Spleen (tissue), 13 donors: ENCODE measurements at regions of chr1 and their contacts with region 1.

Region 1: DNA sequence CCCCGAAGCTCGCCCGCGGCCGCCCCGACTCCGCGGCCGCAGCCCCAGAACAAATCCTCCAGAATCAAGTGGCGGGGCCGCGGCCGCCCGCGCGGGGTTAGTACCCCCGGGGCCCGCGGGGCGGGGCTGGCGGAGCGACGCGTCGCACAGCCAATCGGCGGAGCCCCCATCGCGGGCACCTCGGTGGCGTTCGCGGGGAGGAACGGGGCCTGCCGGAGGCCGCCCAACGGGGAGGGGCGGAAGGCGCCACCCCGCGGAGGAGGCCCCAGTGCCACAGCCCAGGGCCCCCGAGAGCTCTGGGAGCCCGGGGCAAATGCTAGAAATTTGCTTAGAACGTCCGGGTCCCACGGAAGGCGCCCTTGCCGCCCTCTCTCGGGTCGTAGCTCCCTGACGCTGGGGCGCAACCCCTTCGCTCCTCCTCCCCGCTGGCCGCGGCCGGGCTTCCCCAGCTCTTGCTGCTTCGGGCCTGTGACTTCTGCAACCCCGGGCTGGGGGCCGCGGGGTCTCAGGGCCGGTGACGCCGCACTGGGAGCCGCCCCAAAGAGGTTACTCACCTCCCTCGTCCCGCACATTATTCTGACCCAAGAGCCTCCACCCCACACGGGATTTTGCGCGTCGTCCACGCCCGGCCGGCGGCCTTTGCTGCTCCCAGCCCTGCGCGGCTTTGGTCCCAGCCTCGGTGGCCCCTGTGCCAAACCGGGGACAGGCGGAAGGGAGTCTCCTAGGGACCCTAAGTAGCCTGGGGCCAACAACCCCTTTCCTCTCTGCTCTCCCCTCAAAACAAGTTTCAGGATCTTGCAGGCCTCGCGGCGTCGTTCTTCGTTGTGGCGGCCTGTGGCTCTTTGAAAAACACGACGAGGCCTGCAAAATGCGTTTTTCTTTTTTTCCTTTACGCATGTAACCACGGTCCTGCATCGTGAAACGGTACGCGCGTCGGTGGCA is at the start of gene RUNX3:
- DNase-seq: peak; percentile 98
- H3K4me3 ChIP-seq: peak within 1 kb of the TSS; percentile 60 to 95 (median 72)
- H3K27ac ChIP-seq: peak within 1 kb of the TSS; percentile 82 to 99 (median 94)
- H3K4me1 ChIP-seq: peaks cover 32 to 95% (median 81%) of the 10 kb centered on the region in 6 donors
- H3K27me3 ChIP-seq: peaks cover 2 to 96% (median 72%) of the 10 kb centered on the region in 7 donors
- CTCF ChIP-seq: peak in 8 of 11 experiments; percentile 29 to 68 (median 50)
- POLR2A ChIP-seq: peak in 1 of 3 donors; percentile 22
- total RNA-seq, gene RUNX3: 38.1 to 76.3 (median 52.3) TPM

Region 2: GRCh38 chr1:24779689-24780464 is 150.6 kb before region 1 on chr1:
- intact Hi-C with region 1: no loop called
- DNase-seq: no peak
- H3K4me3 ChIP-seq: no peak overlapping the region
- H3K27ac ChIP-seq: no peak overlapping the region
- H3K4me1 ChIP-seq: peaks cover 0 to 32% (median 6%) of the 10 kb centered on the region in 6 donors
- H3K27me3 ChIP-seq: no peaks in the 10 kb centered on the region
- CTCF ChIP-seq: no peak
- POLR2A ChIP-seq: no peak

Region 3: DNA sequence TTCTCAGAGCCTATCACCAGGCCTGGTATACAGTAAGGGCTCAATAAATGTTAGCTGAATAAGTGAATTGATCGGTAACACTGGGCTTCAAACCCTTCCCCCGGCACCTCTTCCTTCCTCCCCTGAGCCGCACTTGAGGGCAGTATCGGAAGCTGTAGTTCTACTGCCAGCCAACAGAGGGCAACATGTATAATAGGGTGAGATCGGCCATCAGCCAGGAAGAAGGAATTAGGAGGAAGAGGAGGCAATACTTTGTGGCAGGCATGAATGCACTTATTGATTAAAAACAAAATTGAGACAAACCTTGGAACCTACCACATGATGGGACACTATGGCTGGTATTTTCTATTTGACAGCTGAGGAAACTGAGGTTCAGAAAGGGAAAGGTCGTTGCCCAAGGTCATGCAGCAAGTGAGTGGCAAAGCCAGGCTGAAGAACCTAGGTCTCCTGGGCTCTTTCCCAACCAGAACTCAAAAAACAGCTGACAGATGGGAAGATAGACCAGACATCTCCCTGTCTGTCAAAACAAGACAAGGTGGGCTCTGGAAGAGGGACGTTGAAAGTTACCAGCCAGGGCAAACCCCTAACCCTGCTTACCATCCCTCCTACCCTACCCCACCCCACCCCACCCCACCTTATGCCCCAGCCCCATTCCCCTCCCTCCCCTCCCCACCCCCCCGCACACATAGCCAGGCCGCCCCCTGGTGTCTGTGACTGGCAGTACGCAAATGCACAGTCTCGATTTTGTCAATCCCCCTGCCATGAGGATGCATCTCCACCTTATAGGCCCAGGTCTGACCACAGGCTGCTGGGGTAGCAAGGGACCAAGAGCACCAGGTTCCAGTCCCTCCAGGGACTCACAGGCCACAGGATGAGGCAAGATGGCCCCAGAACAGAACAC is 106.9 kb after region 1 on chr1:
- intact Hi-C with region 1: loop called (anchors 5 kb)
- DNase-seq: peak; percentile 87
- H3K4me3 ChIP-seq: peak overlapping the region in 1 of 8 donors; percentile 15
- H3K27ac ChIP-seq: peak overlapping the region in 1 of 8 donors; percentile 40
- H3K4me1 ChIP-seq: peaks cover 21 to 58% (median 39%) of the 10 kb centered on the region in 6 donors
- H3K27me3 ChIP-seq: peaks cover 0 to 10% (median 0%) of the 10 kb centered on the region in 7 donors
- CTCF ChIP-seq: peak; percentile 60 to 88 (median 78)
- POLR2A ChIP-seq: no peak